GM23248 (cell line): ENCODE measurements at regions of chr18 and their contacts with region 1.

Region 1: DNA sequence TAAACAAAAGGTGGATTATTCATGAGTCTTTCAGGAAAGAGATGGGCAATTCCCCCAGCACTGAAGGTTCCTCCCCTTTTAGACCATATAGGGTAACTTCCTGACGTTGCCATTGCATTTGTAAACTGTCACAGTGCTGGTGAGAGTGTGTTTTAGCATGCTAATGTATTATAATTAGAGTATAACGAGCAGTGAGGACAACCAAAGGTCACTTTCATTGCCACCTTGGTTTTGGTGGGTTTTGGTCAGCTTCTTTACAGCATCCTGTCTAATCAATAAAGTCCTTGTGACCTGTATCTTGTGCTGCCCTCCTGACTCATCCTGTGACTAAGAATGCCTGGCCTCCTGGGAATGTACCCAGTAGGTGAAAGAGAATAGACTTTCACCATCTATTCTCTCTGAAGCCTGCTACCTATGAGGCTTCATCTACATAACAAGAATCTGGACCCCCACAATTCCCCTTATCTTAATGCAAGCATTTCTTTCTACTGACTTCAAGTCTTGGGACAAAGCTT is 148.7 kb downstream of the CABLES1 start:
- DNase-seq: peak; percentile 67
- H3K4me3 ChIP-seq: no peak overlapping the region
- H3K27ac ChIP-seq: no peak overlapping the region
- H3K4me1 ChIP-seq: peaks cover 24% of the 10 kb centered on the region
- H3K27me3 ChIP-seq: no peaks in the 10 kb centered on the region

Region 2: GRCh38 chr18:21943456-21943855 is 1340.5 kb before region 1 on chr18:
- in situ Hi-C with region 1: no loop called
- DNase-seq: no peak
- H3K4me3 ChIP-seq: no peak overlapping the region
- H3K27ac ChIP-seq: no peak overlapping the region
- H3K4me1 ChIP-seq: no peaks in the 10 kb centered on the region
- H3K27me3 ChIP-seq: peaks cover 11% of the 10 kb centered on the region

Region 3: GRCh38 chr18:23340656-23341055 is 56.7 kb after region 1 on chr18:
- in situ Hi-C with region 1: loop called (anchors 10 kb)
- DNase-seq: no peak
- H3K4me3 ChIP-seq: no peak overlapping the region
- H3K27ac ChIP-seq: no peak overlapping the region
- H3K4me1 ChIP-seq: peaks cover 12% of the 10 kb centered on the region; the same call in 1 of the 2 replicates
- H3K27me3 ChIP-seq: no peaks in the 10 kb centered on the region

Region 4: DNA sequence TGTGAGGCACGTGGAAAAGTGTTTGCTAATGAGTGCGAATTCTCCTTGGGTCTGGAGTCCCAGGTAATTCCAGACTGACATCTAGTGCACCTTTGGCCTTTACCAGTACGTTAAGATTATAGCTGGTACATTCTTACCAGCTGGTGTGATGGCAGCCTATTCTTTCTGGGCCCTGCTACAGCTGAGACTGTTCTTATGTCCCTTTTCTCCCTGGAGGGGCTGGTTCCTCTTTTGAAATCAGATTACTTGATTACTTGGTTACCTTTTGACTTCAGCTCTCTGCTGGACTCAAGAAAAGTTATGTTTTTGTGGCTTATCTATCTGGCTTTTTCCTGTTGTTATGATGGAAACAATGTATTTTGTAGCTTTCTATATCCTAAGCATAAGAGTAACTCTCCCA is 869.4 kb after region 1 on chr18:
- in situ Hi-C with region 1: no loop called
- DNase-seq: no peak
- H3K4me3 ChIP-seq: no peak overlapping the region
- H3K27ac ChIP-seq: no peak overlapping the region
- H3K4me1 ChIP-seq: no peaks in the 10 kb centered on the region
- H3K27me3 ChIP-seq: no peaks in the 10 kb centered on the region